Left lung (tissue), 14 donors: ENCODE measurements at regions of chr14 and their contacts with region 1.

Region 1: GRCh38 chr14:24817212-24818057 is 183.4 kb upstream of the GZMB start:
- DNase-seq: peak in 1 of 4 donors; percentile 50
- ATAC-seq: peak; percentile 39
- H3K4me3 ChIP-seq: no peak overlapping the region
- H3K27ac ChIP-seq: no peak overlapping the region
- H3K4me1 ChIP-seq: peaks cover 0 to 4% of the 10 kb centered on the region in 2 donors
- H3K27me3 ChIP-seq: no peaks in the 10 kb centered on the region
- CTCF ChIP-seq: peak in 1 of 2 donors; percentile 9

Region 2: DNA sequence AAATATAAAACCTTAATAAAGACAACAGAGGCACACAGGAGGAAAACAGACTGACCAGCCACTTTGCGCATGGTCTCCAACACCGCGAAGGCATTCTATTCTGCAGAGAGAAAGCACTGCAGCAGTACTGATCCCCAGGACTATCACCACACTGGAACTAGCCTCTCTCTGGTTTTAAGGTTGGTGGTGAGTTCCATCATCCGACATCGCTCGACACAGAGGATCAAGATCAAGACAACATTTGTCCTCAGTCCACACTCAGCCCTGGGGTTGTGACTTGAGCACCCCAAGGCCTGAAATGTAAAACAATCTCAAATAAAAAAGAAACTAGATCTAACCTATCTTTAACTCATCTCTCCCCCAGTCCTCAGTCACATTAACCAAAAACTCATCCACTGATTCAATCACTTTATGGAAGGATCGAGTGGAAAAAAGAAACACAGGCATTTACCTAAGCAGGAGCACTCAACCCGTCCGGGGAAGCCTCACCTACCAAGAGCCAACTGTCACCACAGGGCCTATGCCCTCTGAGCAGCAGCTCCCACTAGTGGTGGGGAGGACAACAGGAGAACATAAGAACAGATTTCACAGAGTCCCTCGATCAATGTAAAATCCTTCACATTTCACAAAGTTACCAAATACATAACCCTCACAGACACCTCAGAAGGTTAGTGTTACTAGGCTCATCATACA is 214.8 kb after region 1 on chr14:
- intact Hi-C with region 1: loop called in 1 of 2 experiments (anchors 5 kb)
- DNase-seq: no peak
- ATAC-seq: no peak
- H3K4me3 ChIP-seq: no peak overlapping the region
- H3K27ac ChIP-seq: no peak overlapping the region
- H3K4me1 ChIP-seq: no peaks in the 10 kb centered on the region
- H3K27me3 ChIP-seq: no peaks in the 10 kb centered on the region
- CTCF ChIP-seq: no peak